Dendritic cell treated with granulocyte-macrophage colony-stimulating factor and Interleukin-4, amounts not matched to agents 40 ng/mL and 50 ng/mL, for 4 days (primary cell): ENCODE measurements at regions of chrX and their contacts with region 1.

Region 1: DNA sequence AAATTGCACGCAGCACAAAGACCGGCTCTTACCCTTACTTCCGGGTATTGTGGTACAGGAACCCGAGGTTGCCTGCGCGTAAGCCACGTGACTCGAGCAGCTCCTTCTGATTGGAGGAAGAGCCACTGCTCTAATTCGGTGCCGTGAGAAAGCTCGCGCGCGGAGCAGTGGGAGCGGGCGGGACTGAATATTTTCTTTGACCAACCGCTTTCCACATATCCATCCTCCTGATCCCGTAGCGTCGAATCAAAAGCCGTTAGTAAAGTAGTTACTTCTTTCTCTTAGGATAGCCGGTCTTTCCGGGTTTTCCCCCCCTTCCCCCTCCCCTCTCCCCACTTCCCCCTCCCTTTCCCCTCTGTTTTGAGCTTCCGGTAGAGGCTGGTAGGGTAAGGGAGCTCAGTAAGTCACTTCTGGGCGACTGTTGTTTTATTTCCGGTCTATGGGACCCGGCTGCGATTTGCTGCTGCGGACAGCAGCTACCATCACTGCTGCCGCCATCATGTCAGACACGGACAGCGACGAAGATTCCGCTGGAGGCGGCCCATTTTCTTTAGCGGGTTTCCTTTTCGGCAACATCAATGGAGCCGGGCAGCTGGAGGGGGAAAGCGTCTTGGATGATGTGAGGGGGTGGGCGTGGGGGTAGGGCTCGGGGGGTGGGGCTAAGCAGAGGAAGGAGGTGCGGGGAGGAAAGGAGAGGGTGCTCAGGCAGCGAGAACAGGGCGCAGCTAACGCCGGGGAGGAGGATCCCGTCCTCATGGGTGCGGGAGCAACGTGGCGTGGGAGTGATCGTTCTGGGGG is at the start of gene TAF1:
- H3K4me3 Mint-ChIP-seq: peak within 1 kb of the TSS; percentile 96
- H3K27ac Mint-ChIP-seq: peak within 1 kb of the TSS; percentile 96
- H3K4me1 Mint-ChIP-seq: peaks cover 24% of the 10 kb centered on the region
- H3K27me3 Mint-ChIP-seq: no peaks in the 10 kb centered on the region

Region 2: DNA sequence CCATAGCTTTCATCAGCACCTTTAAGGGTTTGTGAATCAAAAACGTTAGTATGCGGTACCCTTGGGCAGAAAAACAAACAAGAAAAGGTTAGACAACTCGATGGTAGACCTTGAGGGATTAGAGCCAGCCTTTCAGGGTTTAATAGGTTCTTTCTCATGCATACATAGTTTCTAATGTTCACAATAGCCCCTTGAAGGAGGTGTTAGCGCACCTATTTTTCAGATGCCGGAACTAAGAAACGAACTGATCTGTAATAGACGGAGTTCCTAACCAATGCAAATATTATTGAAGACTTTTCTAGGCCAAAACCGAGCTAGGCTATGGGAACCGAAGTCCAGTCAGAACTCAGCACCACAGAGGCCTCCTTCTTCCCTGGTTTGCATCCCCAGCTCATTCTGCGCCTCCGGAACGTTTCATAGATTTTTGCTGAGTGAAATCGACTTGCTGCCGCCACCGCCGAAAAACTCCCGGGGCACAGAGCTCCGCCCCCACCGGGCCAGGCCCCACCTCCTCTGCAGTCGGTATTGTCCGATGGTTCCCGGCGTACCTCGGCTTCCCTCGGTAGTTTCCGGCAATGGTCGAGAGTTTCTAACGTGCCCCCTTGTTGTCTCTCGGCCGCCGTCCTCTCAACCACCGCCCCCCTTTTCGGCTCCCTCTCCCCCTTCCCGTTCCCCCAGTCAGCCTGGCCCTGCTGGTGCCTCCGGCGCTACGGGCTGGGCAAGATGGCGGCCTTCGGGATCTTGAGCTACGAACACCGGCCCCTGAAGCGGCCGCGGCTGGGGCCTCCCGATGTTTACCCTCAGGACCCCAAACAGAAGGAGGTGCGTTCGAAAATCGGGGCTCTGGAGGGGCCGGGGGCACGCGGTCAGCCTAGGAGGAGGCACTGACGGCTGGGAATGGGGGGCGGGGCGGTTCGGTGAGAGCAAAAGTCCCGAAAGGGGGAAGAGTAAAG is 247.8 kb before region 1 on chrX and contains the start of gene MED12:
- intact Hi-C with region 1: no loop called
- H3K4me3 Mint-ChIP-seq: peak within 1 kb of the TSS; percentile 86
- H3K27ac Mint-ChIP-seq: peak within 1 kb of the TSS; percentile 95
- H3K4me1 Mint-ChIP-seq: peaks cover 7% of the 10 kb centered on the region
- H3K27me3 Mint-ChIP-seq: no peaks in the 10 kb centered on the region

Region 3: GRCh38 chrX:71283403-71284143 is 82.5 kb before region 1 on chrX and contains the start of gene NONO:
- intact Hi-C with region 1: loop called (anchors 1 kb)
- H3K4me3 Mint-ChIP-seq: peak within 1 kb of the TSS; percentile 91
- H3K27ac Mint-ChIP-seq: peak within 1 kb of the TSS; percentile 100
- H3K4me1 Mint-ChIP-seq: no peaks in the 10 kb centered on the region
- H3K27me3 Mint-ChIP-seq: no peaks in the 10 kb centered on the region

Region 4: GRCh38 chrX:71439420-71439819 is 73.3 kb after region 1 on chrX:
- intact Hi-C with region 1: no loop called
- H3K4me3 Mint-ChIP-seq: no peak overlapping the region
- H3K27ac Mint-ChIP-seq: peak overlapping the region; percentile 37
- H3K4me1 Mint-ChIP-seq: peaks cover 15% of the 10 kb centered on the region
- H3K27me3 Mint-ChIP-seq: no peaks in the 10 kb centered on the region

Region 5: DNA sequence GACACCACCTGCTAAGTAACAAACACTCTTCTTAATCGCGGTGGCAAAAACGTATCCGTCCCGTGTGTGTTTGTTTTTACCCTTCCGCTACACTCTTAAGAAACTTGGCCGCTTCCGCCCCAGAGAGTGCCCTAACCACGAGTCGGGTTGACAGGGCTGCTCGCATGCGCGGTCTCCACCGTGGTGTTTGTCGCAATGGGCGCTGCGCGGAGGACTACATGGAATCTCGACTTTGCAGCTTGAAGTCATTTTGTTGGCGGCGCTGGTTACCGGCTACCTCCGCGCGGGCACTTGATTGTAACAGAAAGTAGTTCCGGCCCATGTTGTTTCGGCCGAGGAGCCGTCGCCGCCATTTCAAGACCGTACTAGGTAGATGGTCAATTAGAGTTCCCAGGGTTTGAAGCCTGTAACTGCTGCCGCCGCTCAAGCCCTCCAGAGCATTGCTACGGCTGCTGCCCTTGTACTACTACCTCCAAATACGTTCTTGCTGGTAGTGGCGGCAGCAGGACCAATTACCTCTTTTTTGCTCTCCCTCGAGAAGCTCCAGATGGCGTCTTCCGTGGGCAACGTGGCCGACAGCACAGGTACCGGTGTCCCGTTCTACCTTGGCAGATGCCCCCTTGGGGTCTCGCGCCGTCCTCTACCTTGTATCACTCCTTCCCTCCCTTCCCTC is 166.8 kb after region 1 on chrX and contains the start of gene OGT:
- intact Hi-C with region 1: loop called (anchors 2 kb)
- H3K4me3 Mint-ChIP-seq: peak within 1 kb of the TSS; percentile 99
- H3K27ac Mint-ChIP-seq: peak within 1 kb of the TSS; percentile 98
- H3K4me1 Mint-ChIP-seq: peaks cover 7% of the 10 kb centered on the region
- H3K27me3 Mint-ChIP-seq: no peaks in the 10 kb centered on the region